ENCODE measurements at regions of chr2 and their contacts with region 1.

Region 1: DNA sequence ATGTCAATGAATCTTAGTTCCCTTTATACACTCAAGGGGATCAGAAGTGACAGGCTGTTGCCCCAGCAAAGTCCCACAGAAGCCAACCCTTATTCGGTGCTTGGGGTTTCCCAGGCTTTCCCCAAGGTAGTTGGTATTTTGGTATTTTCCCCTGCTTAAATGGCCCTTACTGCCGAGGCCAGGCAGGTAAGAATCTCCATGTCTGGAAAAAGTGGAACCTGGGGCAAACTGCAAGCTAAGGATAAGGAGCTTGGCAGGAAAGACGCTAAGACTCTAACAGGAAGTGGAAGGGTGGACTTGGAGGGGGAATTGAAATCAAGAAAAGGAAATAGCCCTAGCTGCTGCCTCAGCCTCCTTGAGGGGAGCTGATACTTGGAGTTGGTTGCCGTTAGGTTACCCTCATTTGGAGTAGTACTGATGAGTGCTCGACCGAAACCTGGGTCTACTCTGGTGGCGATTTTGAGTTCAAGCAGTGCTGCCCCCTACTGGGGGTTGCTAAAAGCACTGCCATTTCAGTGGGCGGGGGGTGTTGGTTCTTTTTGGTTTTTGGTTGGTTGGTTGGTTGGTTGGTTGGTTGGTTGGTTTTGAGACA is 3.3 kb upstream of the GPBAR1 start:
- DNase-seq: no peak
- H3K4me3 ChIP-seq: no peak overlapping the region
- H3K27ac ChIP-seq: peak overlapping the region; percentile 11 to 82 (median 26)
- H3K4me1 ChIP-seq: peaks cover 50 to 58% (median 52%) of the 10 kb centered on the region in 4 donors
- H3K27me3 ChIP-seq: no peaks in the 10 kb centered on the region
- CTCF ChIP-seq: peak; percentile 42 to 57 (median 47)
- EP300 ChIP-seq: no peak
- POLR2A ChIP-seq: no peak

Region 2: DNA sequence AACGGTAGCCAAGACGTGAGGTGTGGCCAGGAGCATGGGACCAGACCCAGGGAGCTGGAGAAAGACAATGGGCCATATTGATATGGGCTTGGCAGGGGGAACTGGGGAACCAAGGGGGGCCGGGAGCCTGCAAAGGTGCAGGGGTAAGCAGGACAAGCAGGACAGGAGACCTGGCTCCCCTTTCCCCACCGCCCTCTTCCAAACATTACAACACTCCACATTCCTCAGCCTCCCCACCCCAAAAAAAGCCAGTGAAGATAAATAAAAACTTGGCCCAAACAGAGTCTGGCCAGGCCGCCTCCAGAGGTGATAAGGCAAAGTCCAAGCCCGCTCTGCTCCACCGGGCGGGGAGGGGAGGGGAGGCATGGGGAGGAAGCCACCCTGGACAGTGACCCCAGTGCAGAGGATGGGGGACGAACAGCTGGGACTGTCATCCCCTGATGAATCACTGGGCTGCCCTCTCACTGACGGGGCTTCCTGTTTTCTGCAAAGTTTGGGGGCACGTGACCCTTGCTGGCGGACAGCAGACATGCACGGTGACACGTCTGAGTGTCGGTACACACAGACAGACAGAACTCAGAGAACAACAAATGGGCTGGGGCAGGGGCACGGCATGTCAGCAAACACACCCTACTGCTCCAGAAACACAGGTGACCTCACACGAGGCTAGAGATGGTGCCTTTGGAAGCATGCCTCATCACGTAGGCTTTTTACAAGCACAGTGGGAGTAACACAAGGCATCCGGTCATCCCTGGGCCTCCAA is 354.9 kb before region 1 on chr2:
- intact Hi-C with region 1: no loop called
- DNase-seq: peak; percentile 96
- H3K4me3 ChIP-seq: peak overlapping the region; percentile 17 to 35 (median 27)
- H3K27ac ChIP-seq: peak overlapping the region; percentile 89 to 98 (median 97)
- H3K4me1 ChIP-seq: peaks cover 100% of the 10 kb centered on the region in 4 donors
- H3K27me3 ChIP-seq: no peaks in the 10 kb centered on the region
- CTCF ChIP-seq: no peak
- EP300 ChIP-seq: no peak
- POLR2A ChIP-seq: no peak

Region 3: DNA sequence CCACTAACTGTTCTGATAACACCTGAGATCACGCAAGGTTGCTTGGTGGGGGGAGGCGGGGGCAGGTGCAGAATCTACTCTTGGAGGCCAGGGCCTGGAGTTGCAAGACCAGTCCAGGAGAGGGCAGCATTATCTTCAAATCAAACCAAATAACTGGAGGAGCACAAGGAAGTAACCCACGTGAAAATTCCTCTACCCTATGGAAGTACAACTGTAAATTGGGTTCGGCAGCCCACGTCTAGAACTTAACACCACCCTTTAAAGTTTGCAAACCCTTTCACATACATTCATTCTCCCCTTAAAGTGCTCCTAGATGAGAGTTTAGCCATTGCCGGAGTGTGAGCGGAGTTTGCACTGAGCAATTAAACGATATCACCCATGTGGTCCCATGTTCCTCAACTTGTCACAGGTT is 71.1 kb before region 1 on chr2:
- intact Hi-C with region 1: loop called (anchors 5 kb)
- DNase-seq: no peak
- H3K4me3 ChIP-seq: no peak overlapping the region
- H3K27ac ChIP-seq: peak overlapping the region in 2 of 4 donors; percentile 59 to 63
- H3K4me1 ChIP-seq: peaks cover 7 to 24% (median 22%) of the 10 kb centered on the region in 4 donors
- H3K27me3 ChIP-seq: no peaks in the 10 kb centered on the region
- CTCF ChIP-seq: peak; percentile 84 to 93 (median 90)
- EP300 ChIP-seq: no peak
- POLR2A ChIP-seq: no peak

Region 4: DNA sequence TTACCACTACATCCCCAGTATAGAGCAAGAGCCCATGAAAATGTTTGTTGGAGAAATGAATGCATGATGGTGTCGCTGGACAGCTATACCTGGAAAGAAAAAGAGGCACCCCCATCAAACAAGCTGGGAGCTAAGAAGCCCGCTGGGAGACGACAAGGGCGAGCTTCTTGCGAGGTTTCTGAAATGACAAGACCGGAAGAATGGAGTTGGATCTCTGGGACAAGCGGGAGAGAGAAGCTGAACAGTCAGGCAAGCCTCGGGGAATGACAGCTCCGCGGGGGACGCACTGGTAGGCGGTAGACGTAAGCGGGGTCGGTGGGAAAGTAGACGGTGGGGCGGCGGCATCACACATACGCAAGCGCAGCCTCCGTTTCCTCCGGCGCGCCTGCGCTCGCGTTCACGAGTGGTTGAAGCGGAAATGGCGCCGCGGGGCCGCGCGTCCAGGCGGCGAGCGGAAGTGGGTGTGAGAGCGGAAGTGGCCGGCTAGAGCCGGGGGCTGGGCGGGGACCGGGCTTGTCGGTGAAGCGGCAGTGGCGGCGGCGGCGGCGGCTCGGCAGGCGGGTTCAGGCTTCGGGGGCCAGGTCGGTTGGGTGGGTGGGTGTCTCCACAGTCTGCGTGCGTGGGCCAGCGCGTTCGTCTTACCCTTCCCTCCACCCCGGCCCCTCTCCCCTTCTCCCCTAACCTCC is 40.7 kb before region 1 on chr2 and contains the start of gene ARPC2:
- intact Hi-C with region 1: loop called (anchors 5 kb)
- DNase-seq: peak; percentile 98
- H3K4me3 ChIP-seq: peak within 1 kb of the TSS; percentile 84 to 96 (median 86)
- H3K27ac ChIP-seq: peak within 1 kb of the TSS; percentile 89 to 96 (median 94)
- H3K4me1 ChIP-seq: peaks cover 33 to 50% (median 47%) of the 10 kb centered on the region in 4 donors
- H3K27me3 ChIP-seq: no peaks in the 10 kb centered on the region
- CTCF ChIP-seq: peak in 1 of 3 experiments; percentile 35
- EP300 ChIP-seq: no peak
- POLR2A ChIP-seq: peak; percentile 43
- total RNA-seq, gene ARPC2: 257 to 300 (median 270) TPM

Measured in esophagus muscularis mucosa (tissue), 4 donors.